ENCODE measurements at regions of chr14 and their contacts with region 1.

Region 1: GRCh38 chr14:77542421-77543239 is 44.0 kb upstream of the ISM2 start:
- DNase-seq: no peak
- ATAC-seq: peak in 2 of 4 donors; percentile 59 to 76
- H3K4me3 ChIP-seq: no peak overlapping the region
- H3K27ac ChIP-seq: peak overlapping the region in 8 of 12 donors; percentile 27 to 73 (median 36)
- H3K4me1 ChIP-seq: peaks cover 0 to 37% (median 5%) of the 10 kb centered on the region in 12 donors
- H3K27me3 ChIP-seq: no peaks in the 10 kb centered on the region
- CTCF ChIP-seq: no peak
- POLR2A ChIP-seq: no peak

Region 2: GRCh38 chr14:77301103-77301502 is 241.5 kb before region 1 on chr14:
- intact Hi-C with region 1: loop called in 2 of 10 experiments (anchors 10 kb)
- DNase-seq: peak in 4 of 5 donors; percentile 57 to 82 (median 68)
- ATAC-seq: peak; percentile 37 to 73 (median 72)
- H3K4me3 ChIP-seq: no peak overlapping the region
- H3K27ac ChIP-seq: no peak overlapping the region
- H3K4me1 ChIP-seq: peaks cover 0 to 17% (median 0%) of the 10 kb centered on the region in 12 donors
- H3K27me3 ChIP-seq: no peaks in the 10 kb centered on the region
- CTCF ChIP-seq: peak; percentile 41 to 71 (median 58)
- POLR2A ChIP-seq: no peak

Region 3: DNA sequence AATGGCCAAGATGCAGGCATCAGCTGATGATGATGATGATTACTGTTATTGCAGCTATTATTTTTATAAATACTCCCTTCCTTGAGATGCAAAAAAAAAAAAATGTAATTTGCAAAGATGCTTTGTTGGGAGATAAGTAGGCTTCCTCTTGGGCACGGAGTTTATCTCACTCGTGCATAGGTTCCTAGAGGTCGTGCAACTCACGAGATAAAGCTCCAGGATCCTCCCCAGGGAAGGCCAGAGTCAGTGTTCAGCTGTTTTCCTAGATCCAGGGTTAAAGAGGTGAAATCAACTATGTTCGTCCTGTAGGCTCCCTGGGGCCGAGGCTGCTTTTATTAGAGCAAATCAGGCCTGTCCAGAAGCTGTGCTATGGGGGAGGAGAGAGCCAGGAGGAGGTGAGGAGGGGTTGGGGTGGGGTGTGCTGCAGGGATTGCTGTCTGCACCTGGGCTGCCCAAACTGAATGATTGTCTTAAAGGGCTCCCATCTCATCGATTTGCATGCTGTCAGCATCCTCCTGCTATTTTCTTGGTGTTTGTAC is 897.8 kb after region 1 on chr14:
- intact Hi-C with region 1: no loop called
- DNase-seq: no peak
- ATAC-seq: no peak
- H3K4me3 ChIP-seq: no peak overlapping the region
- H3K27ac ChIP-seq: no peak overlapping the region
- H3K4me1 ChIP-seq: no peaks in the 10 kb centered on the region
- H3K27me3 ChIP-seq: peaks cover 0 to 6% (median 0%) of the 10 kb centered on the region in 9 donors
- CTCF ChIP-seq: no peak
- POLR2A ChIP-seq: no peak